MCF 10A (cell line): ENCODE measurements at regions of chr14 and their contacts with region 1.

Region 1: GRCh38 chr14:61525293-61526011 is 169.9 kb upstream of the HIF1A start:
- DNase-seq: peak; percentile 99
- H3K4me3 Mint-ChIP-seq: peak overlapping the region; percentile 1
- H3K27ac Mint-ChIP-seq: peak overlapping the region; percentile 75
- H3K4me1 Mint-ChIP-seq: peaks cover 56% of the 10 kb centered on the region
- H3K27me3 Mint-ChIP-seq: no peaks in the 10 kb centered on the region
- CTCF ChIP-seq: no peak

Region 2: DNA sequence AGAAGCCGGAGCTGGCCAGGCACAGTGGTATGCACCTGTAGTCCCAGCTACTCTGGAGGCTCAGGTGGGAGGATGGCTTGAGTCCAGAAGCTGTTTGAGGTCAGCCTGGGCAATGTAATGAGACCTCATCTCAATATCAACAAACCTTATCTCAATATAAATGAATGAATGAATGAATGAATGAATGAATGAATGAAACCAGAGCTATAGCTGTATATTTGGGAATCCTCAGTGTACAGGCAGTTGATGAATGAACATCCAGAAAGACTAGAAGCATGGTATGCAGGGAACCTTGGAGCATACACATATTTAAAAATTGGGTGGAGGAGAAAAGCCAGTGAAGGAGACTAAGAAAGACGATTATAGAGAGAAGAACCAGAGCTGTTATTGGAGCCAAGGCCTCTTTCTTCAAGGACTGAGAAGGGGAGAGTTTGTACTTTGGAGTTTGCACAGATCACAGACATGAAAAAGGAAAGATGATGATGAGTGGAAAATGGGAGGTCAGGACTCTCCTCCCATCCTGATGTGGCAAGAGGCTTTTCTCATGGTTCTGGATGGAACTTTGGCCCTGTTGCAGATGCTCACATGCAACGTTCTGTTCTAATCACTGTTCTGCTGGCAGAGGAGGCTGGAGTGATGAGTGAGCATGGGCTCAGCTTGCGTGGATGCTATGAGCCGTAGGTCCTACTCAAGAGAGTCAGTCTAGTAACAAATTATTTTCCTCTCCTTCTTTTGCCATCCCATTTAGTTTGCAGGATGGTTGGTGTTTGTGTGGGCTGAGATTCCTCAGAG is 89.7 kb before region 1 on chr14:
- CTCF ChIA-PET with region 1: no interaction called
- POLR2A ChIA-PET with region 1: no interaction called
- intact Hi-C with region 1: no loop called
- DNase-seq: no peak
- H3K4me3 Mint-ChIP-seq: no peak overlapping the region
- H3K27ac Mint-ChIP-seq: no peak overlapping the region
- H3K4me1 Mint-ChIP-seq: peaks cover 24% of the 10 kb centered on the region
- H3K27me3 Mint-ChIP-seq: no peaks in the 10 kb centered on the region
- CTCF ChIP-seq: no peak

Region 3: GRCh38 chr14:61461808-61462275 is 63.6 kb before region 1 on chr14:
- CTCF ChIA-PET with region 1: interaction called, 8 read pairs
- POLR2A ChIA-PET with region 1: interaction called, 18 read pairs
- intact Hi-C with region 1: no loop called
- DNase-seq: peak; percentile 78
- H3K4me3 Mint-ChIP-seq: no peak overlapping the region
- H3K27ac Mint-ChIP-seq: peak overlapping the region; percentile 22
- H3K4me1 Mint-ChIP-seq: peaks cover 27% of the 10 kb centered on the region
- H3K27me3 Mint-ChIP-seq: no peaks in the 10 kb centered on the region
- CTCF ChIP-seq: peak; percentile 60

Region 4: DNA sequence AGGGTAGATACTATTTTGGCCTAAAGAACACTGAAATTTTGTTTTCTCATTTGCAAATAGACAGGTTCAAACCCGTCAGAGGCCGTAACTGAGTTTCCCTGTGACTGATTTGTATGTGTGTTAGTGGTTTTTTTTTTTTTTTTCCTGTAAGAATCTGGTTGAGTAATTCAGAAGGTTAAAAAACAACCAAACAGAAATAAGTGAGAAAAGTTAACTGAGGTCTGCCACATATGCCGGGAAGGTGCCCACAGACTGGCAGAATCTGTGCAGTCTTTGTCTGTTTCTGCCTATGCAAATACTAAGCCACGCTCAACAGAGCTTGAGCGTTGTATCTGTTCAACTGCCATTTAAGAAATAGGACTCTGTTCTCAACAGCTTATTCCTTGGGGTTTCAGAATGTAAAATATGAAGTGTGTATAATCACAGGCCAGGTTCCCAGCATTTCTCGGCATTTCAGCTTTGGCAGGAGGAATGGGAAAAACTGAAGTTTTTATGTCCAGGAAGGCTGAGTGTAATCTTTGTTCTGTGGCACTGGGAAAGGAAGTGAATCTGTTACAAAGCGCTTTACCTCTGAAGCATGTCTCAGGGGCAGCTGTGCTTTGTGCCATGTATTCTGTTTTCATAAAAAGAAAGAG is 22.2 kb before region 1 on chr14:
- CTCF ChIA-PET with region 1: interaction called, 7 read pairs
- POLR2A ChIA-PET with region 1: interaction called, 88 read pairs
- intact Hi-C with region 1: no loop called
- DNase-seq: peak; percentile 80
- H3K4me3 Mint-ChIP-seq: peak overlapping the region; percentile 44
- H3K27ac Mint-ChIP-seq: peak overlapping the region; percentile 91
- H3K4me1 Mint-ChIP-seq: peaks cover 28% of the 10 kb centered on the region
- H3K27me3 Mint-ChIP-seq: no peaks in the 10 kb centered on the region
- CTCF ChIP-seq: no peak

Region 5: GRCh38 chr14:61537563-61538463 is 12.4 kb after region 1 on chr14:
- CTCF ChIA-PET with region 1: no interaction called
- POLR2A ChIA-PET with region 1: interaction called, 72 read pairs
- intact Hi-C with region 1: no loop called
- DNase-seq: peak; percentile 97
- H3K4me3 Mint-ChIP-seq: peak overlapping the region; percentile 10
- H3K27ac Mint-ChIP-seq: peak overlapping the region; percentile 88
- H3K4me1 Mint-ChIP-seq: peaks cover 32% of the 10 kb centered on the region
- H3K27me3 Mint-ChIP-seq: no peaks in the 10 kb centered on the region
- CTCF ChIP-seq: no peak

Region 6: GRCh38 chr14:61553725-61554641 is 28.5 kb after region 1 on chr14:
- CTCF ChIA-PET with region 1: interaction called, 4 read pairs
- POLR2A ChIA-PET with region 1: interaction called, 23 read pairs
- intact Hi-C with region 1: no loop called
- DNase-seq: peak; percentile 97
- H3K4me3 Mint-ChIP-seq: no peak overlapping the region
- H3K27ac Mint-ChIP-seq: peak overlapping the region; percentile 37
- H3K4me1 Mint-ChIP-seq: peaks cover 38% of the 10 kb centered on the region
- H3K27me3 Mint-ChIP-seq: no peaks in the 10 kb centered on the region
- CTCF ChIP-seq: no peak

Region 7: GRCh38 chr14:61568572-61569131 is 43.2 kb after region 1 on chr14:
- CTCF ChIA-PET with region 1: interaction called, 15 read pairs
- POLR2A ChIA-PET with region 1: interaction called, 108 read pairs
- intact Hi-C with region 1: loop called (anchors 2 kb)
- DNase-seq: peak; percentile 69
- H3K4me3 Mint-ChIP-seq: peak overlapping the region; percentile 67
- H3K27ac Mint-ChIP-seq: peak overlapping the region; percentile 85
- H3K4me1 Mint-ChIP-seq: peaks cover 75% of the 10 kb centered on the region
- H3K27me3 Mint-ChIP-seq: no peaks in the 10 kb centered on the region
- CTCF ChIP-seq: peak; percentile 7